WTC11 (cell line): ENCODE measurements at regions of chr7 and their contacts with region 1.

Region 1: GRCh38 chr7:101363734-101364374 is 1.2 kb downstream of the COL26A1 start:
- DNase-seq: peak; percentile 75
- ATAC-seq: peak; percentile 79
- H3K4me3 Mint-ChIP-seq: peak overlapping the region; percentile 62
- H3K27ac Mint-ChIP-seq: no peak overlapping the region
- H3K4me1 Mint-ChIP-seq: peaks cover 28% of the 10 kb centered on the region
- H3K27me3 Mint-ChIP-seq: peaks cover 6% of the 10 kb centered on the region; the same call in 1 of the 2 replicates
- CTCF ChIP-seq: peak; percentile 91

Region 2: DNA sequence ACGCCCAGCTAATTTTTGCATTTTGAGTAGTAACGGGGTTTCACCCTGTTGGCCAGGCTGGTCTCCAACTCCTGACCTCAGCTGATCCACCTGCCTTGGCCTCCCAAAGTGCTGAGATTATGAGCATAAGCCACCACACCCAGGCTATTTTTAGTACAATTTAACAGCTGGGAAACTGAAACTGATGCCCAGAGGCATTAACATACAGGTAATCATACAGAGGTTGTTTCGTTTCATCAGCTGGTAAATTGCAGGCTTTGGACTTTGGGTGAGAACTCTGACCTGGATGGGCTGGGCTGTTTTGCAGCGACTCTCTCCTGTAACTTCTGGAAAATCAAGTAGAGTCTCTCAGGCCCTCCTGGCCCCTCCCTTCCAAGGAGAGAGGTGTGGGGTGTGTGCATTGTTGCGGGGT is 461.9 kb before region 1 on chr7:
- CTCF ChIA-PET with region 1: no interaction called
- POLR2A ChIA-PET with region 1: no interaction called
- DNase-seq: no peak
- ATAC-seq: no peak
- H3K4me3 Mint-ChIP-seq: no peak overlapping the region
- H3K27ac Mint-ChIP-seq: no peak overlapping the region
- H3K4me1 Mint-ChIP-seq: peaks cover 9% of the 10 kb centered on the region
- H3K27me3 Mint-ChIP-seq: peaks cover 14% of the 10 kb centered on the region
- CTCF ChIP-seq: no peak

Region 3: GRCh38 chr7:101436857-101437576 is 73.2 kb after region 1 on chr7:
- CTCF ChIA-PET with region 1: interaction called, 16 read pairs
- POLR2A ChIA-PET with region 1: interaction called, 6 read pairs
- DNase-seq: peak; percentile 94
- ATAC-seq: peak; percentile 87
- H3K4me3 Mint-ChIP-seq: no peak overlapping the region
- H3K27ac Mint-ChIP-seq: peak overlapping the region; percentile 79
- H3K4me1 Mint-ChIP-seq: peaks cover 26% of the 10 kb centered on the region
- H3K27me3 Mint-ChIP-seq: no peaks in the 10 kb centered on the region
- CTCF ChIP-seq: no peak